ENCODE measurements at regions of chr4 and their contacts with region 1.

Region 1: GRCh38 chr4:78864405-78865024 is 74.7 kb downstream of the PAQR3 start:
- DNase-seq: peak; percentile 38
- H3K4me3 ChIP-seq: no peak overlapping the region
- H3K27me3 ChIP-seq: no peaks in the 10 kb centered on the region
- CTCF ChIP-seq: peak; percentile 67

Region 2: GRCh38 chr4:78612398-78613178 is 251.9 kb before region 1 on chr4:
- CTCF ChIA-PET with region 1: interaction called, 11 read pairs
- POLR2A ChIA-PET with region 1: no interaction called
- DNase-seq: no peak
- H3K4me3 ChIP-seq: no peak overlapping the region
- H3K27me3 ChIP-seq: no peaks in the 10 kb centered on the region
- CTCF ChIP-seq: peak; percentile 60

Measured in BJ (cell line).